Activated naive CD8-positive, alpha-beta T cell treated with anti-CD3 and anti-CD28 coated beads, Interleukin-2, amount 10 ng/mL, durations not matched to agents 7 days and 5 days (primary cell): ENCODE measurements at regions of chr4 and their contacts with region 1.

Region 1: DNA sequence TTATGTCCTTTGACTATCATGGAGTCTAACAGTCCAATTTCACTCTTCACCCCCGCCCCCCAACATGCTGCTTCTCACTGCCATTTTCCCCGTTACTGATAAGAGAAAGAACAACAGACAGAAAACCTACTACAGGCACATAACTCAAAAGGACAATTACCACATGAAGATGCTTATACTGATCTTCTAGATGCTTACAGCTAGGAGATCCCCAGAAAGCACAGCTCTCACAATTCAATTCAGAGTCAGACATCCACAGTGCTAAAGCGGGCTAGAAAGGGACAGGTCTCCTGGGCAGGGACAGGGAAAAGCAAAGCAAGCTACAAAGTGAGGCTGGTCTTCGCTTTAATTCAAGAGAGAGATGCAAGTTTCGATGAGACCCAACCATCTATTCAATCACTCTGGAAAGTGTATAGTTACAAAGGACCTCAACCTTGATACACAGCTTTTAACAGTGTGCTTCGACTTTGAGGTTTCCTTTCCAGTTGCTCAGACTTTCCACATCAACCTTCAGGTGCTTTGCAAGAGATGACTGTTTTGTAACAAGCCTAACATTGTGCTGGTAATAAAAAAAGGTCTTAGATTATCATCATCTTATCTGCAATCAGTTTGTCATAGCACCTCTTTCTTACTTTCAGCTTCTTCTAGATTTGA is 60.9 kb downstream of the LEF1 start:
- DNase-seq: no peak
- ATAC-seq: peak; percentile 76
- H3K4me3 Mint-ChIP-seq: peak overlapping the region; percentile 91
- H3K27ac Mint-ChIP-seq: peak overlapping the region; percentile 96
- H3K4me1 Mint-ChIP-seq: peaks cover 82% of the 10 kb centered on the region
- H3K27me3 Mint-ChIP-seq: no peaks in the 10 kb centered on the region

Region 2: GRCh38 chr4:107970063-107970798 is 137.6 kb before region 1 on chr4:
- POLR2A ChIA-PET with region 1: no interaction called
- DNase-seq: no peak
- ATAC-seq: no peak
- H3K4me3 Mint-ChIP-seq: no peak overlapping the region
- H3K27ac Mint-ChIP-seq: no peak overlapping the region
- H3K4me1 Mint-ChIP-seq: peaks cover 5% of the 10 kb centered on the region
- H3K27me3 Mint-ChIP-seq: peaks cover 4% of the 10 kb centered on the region

Region 3: GRCh38 chr4:107996949-107997788 is 110.7 kb before region 1 on chr4:
- POLR2A ChIA-PET with region 1: no interaction called
- DNase-seq: no peak
- ATAC-seq: no peak
- H3K4me3 Mint-ChIP-seq: no peak overlapping the region
- H3K27ac Mint-ChIP-seq: no peak overlapping the region
- H3K4me1 Mint-ChIP-seq: peaks cover 32% of the 10 kb centered on the region
- H3K27me3 Mint-ChIP-seq: no peaks in the 10 kb centered on the region

Region 4: GRCh38 chr4:108036213-108036612 is 71.6 kb before region 1 on chr4:
- POLR2A ChIA-PET with region 1: interaction called, 15 read pairs
- DNase-seq: peak; percentile 64
- ATAC-seq: peak; percentile 96
- H3K4me3 Mint-ChIP-seq: peak overlapping the region; percentile 80
- H3K27ac Mint-ChIP-seq: peak overlapping the region; percentile 92
- H3K4me1 Mint-ChIP-seq: peaks cover 47% of the 10 kb centered on the region
- H3K27me3 Mint-ChIP-seq: no peaks in the 10 kb centered on the region

Region 5: GRCh38 chr4:108139089-108139488 is 31.2 kb after region 1 on chr4:
- POLR2A ChIA-PET with region 1: interaction called, 16 read pairs
- DNase-seq: no peak
- ATAC-seq: no peak
- H3K4me3 Mint-ChIP-seq: peak overlapping the region; percentile 71
- H3K27ac Mint-ChIP-seq: peak overlapping the region; percentile 84
- H3K4me1 Mint-ChIP-seq: peaks cover 76% of the 10 kb centered on the region
- H3K27me3 Mint-ChIP-seq: no peaks in the 10 kb centered on the region

Region 6: DNA sequence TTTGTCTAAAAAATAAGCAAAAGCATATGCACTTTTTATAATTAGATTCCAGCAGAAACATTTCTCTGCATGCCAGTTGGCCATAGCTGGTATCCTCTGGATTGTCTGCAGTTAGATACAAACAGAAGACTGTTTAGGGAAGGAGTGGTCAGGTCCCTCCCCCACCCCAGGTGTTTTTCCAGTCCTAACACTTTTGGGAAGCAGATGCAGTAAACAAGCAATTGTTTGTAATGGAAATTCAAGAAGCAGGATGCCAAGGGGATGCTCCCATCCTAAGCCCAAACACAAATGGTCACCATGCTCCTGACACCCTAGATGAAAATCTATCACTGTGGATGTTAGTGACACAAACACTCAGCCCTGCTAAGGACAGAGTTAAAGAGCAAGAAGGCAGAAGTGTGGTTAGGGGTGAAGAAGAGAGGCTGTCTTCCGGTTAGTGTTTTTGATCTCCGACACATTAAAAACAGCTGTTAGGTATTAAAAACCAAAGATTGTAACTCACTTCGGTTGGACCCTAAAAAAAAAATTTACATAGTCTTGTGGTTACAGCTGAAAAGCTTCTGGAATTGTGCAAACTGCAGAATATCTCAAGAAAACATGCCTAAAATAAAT is 53.0 kb after region 1 on chr4:
- POLR2A ChIA-PET with region 1: interaction called, 73 read pairs
- DNase-seq: no peak
- ATAC-seq: peak; percentile 41
- H3K4me3 Mint-ChIP-seq: peak overlapping the region; percentile 80
- H3K27ac Mint-ChIP-seq: peak overlapping the region; percentile 83
- H3K4me1 Mint-ChIP-seq: peaks cover 58% of the 10 kb centered on the region
- H3K27me3 Mint-ChIP-seq: no peaks in the 10 kb centered on the region

Region 7: DNA sequence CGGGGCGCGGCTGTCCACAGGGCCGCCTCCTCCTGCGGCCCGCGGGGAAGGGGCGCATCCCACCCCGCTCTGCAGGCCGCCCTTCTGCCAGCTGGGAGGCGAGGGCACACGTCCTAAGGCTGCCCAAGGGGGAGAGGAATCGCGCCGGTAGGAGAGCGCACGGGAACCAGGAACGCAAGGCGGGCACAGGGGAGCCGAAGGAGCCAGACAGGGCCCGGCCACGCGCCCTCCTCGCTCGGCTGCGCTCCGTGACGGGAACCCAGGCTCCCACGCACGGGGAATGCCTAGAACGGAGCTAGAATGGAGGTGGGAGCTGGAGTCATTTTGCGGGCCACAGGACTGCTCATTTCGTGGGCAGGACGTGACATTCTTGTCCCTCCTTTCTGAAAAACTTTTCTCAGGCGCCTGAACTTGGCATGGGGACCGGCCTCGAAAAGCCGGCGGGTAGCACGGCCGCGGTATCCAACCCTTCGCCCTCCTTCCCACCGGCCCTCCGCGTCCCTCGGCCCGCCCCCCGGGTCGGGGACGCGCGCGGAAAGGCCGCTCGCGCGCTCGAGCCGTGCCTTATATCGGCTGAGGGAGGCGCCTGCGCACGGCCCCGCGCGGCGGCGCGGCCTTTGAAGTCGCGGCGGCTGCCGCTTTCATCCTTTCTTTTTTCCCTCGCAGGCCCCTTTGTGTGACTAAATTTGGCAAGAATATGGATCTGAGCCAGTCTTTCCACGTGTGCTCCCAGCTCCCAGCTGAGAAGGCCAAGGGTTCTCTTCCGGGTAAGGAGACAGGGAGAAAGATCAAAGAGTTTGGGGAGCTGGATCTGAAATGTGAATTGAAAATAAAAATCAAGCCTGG is 65.1 kb after region 1 on chr4:
- POLR2A ChIA-PET with region 1: interaction called, 73 read pairs
- DNase-seq: peak; percentile 86
- ATAC-seq: peak; percentile 46
- H3K4me3 Mint-ChIP-seq: peak overlapping the region; percentile 99
- H3K27ac Mint-ChIP-seq: peak overlapping the region; percentile 89
- H3K4me1 Mint-ChIP-seq: peaks cover 44% of the 10 kb centered on the region
- H3K27me3 Mint-ChIP-seq: peaks cover 5% of the 10 kb centered on the region